Activated CD4-positive, alpha-beta memory T cell treated with anti-CD3 and anti-CD28 coated beads for 36 hours (primary cell): ENCODE measurements at regions of chr3 and their contacts with region 1.

Region 1: DNA sequence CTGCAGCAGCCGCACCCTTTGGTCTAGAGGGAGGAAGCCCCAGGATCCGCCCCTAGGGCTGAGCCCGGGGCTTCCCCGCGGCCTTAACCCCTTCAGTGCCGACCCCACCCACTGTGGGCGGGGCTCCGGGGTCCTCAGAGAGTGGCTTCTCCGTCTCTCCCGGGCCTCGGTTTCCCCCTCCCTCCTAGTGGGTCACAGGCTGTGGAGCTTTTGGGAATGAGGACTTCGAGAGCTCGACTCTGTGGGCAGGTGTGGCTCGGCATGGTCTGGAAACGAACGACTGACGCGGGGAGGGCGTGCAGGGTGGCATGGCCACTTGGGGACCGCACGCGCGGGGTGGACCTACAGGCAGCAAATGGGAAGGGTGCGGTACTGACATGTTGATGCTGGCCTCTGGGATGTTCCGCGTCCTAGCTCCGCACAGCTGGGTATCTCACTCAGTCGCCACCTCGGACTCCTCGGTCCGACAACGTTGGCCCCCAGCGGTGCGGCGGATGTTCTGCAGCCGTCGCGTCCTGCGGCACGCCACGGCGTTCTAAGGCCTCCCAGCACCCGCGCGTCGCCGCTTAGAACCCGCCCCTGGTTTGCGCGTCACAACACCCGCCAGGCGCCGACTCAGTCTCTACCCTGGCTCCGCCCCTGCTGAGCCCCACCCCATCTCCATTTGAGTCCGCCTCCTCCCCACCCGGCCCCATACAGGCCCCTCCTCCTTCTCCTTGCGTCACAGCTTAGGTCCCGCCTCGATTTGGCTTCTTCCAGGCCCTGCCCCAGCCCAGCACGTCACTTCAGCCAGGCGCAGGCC is at the starts of genes HYAL3 and NAA80:
- DNase-seq: peak; percentile 100
- H3K4me3 Mint-ChIP-seq: peak within 1 kb of the TSS; percentile 97
- H3K27ac Mint-ChIP-seq: peak within 1 kb of the TSS; percentile 95
- H3K4me1 Mint-ChIP-seq: peaks cover 24% of the 10 kb centered on the region
- H3K27me3 Mint-ChIP-seq: no peaks in the 10 kb centered on the region
- total RNA-seq, gene HYAL3: 2.5 to 4.0 TPM
- total RNA-seq, gene NAA80: 18.8 to 19.6 TPM

Region 2: GRCh38 chr3:50321336-50322114 is 22.5 kb after region 1 on chr3:
- CTCF ChIA-PET with region 1: interaction called, 30 read pairs
- POLR2A ChIA-PET with region 1: interaction called, 5 read pairs
- intact Hi-C with region 1: loop called (anchors 1 kb)
- DNase-seq: peak; percentile 88
- H3K4me3 Mint-ChIP-seq: peak overlapping the region; percentile 77
- H3K27ac Mint-ChIP-seq: peak overlapping the region; percentile 86
- H3K4me1 Mint-ChIP-seq: peaks cover 30% of the 10 kb centered on the region
- H3K27me3 Mint-ChIP-seq: no peaks in the 10 kb centered on the region

Region 3: GRCh38 chr3:50327943-50328691 is 29.1 kb after region 1 on chr3 and contains the start of gene TUSC2:
- CTCF ChIA-PET with region 1: interaction called, 30 read pairs
- POLR2A ChIA-PET with region 1: interaction called, 7 read pairs
- intact Hi-C with region 1: loop called (anchors 2 kb)
- DNase-seq: peak; percentile 98
- H3K4me3 Mint-ChIP-seq: peak within 1 kb of the TSS; percentile 89
- H3K27ac Mint-ChIP-seq: peak within 1 kb of the TSS; percentile 64
- H3K4me1 Mint-ChIP-seq: peaks cover 23% of the 10 kb centered on the region
- H3K27me3 Mint-ChIP-seq: no peaks in the 10 kb centered on the region
- total RNA-seq, gene TUSC2: 18.7 to 19.7 TPM

Region 4: DNA sequence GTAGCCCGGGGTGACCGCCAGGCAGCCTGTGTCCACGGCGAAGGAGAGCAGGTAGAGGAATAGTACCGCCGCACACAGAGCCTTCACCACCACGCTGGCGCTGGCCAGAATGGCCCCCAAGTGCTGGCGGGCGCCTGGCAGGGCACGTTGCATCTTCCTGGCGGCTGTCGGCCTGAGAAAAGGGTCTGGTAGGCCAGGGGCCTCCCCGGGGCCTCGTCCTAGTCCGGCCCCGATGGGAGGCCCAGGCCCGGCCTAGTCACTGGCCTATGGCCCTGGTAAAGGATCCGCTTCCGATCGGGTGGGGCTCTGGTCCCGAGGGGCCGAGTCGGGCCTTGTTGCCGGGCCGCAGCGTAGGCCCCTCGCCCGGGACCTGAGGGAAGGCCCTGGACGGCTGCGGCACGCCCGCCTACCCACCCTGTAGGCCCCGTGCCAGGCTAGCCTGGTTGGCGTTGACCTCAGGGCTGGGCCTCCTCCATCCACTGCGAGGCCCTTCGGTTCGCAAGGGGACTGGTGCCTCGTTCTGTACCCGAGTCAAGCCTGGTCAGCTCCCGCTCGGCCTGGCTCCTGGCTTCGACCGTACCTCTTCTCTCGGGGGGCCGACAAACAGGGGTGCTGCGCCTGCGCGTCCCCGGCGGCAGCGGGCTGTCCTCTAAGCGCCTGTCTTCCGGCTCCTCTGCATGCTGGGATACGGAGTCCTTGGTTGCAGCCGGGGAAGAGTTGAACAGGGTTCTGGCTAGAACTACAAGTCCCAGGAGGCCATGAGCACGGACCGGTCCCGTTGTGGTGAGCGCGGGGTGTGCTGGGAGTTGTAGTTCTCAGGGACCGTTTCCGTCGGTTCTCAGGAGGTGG is 60.1 kb after region 1 on chr3 and contains the start of gene TMEM115:
- CTCF ChIA-PET with region 1: no interaction called
- POLR2A ChIA-PET with region 1: no interaction called
- intact Hi-C with region 1: loop called (anchors 2 kb)
- DNase-seq: peak; percentile 97
- H3K4me3 Mint-ChIP-seq: peak within 1 kb of the TSS; percentile 95
- H3K27ac Mint-ChIP-seq: peak within 1 kb of the TSS; percentile 86
- H3K4me1 Mint-ChIP-seq: peaks cover 39% of the 10 kb centered on the region
- H3K27me3 Mint-ChIP-seq: no peaks in the 10 kb centered on the region
- total RNA-seq, gene TMEM115: 16.0 TPM

Region 5: DNA sequence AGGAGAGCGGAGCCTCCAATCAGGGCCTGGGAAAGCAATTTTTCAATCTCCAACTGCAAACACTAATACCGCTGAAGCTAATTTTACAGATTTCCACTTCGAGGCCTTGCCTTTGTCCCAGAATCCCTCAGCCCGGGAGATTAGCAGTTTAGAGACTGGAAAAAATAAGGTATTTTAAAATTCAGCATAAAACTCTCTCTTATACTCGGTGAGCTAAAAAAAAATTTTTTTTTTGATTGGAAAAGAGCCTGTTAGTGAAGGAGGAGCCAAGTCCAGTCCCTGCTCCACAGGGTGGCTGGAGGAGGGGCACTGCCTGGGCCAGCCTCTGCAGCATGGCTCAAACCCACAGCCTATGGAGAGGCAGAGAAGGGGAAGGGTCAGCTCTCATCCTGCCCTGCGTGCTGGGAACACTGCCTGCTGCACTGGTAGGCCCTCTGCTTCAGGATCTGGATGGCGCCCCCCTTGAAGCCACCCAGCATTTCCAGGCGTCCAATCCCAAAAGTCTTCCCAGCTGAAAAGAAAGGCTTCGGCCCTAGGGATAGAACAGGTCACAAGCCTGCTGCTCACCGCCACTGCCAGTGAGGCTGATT is 155.5 kb after region 1 on chr3:
- CTCF ChIA-PET with region 1: no interaction called
- POLR2A ChIA-PET with region 1: no interaction called
- intact Hi-C with region 1: no loop called
- DNase-seq: no peak
- H3K4me3 Mint-ChIP-seq: no peak overlapping the region
- H3K27ac Mint-ChIP-seq: no peak overlapping the region
- H3K4me1 Mint-ChIP-seq: peaks cover 9% of the 10 kb centered on the region
- H3K27me3 Mint-ChIP-seq: no peaks in the 10 kb centered on the region